AG04450 (cell line): ENCODE measurements at regions of chr2 and their contacts with region 1.

Region 1: DNA sequence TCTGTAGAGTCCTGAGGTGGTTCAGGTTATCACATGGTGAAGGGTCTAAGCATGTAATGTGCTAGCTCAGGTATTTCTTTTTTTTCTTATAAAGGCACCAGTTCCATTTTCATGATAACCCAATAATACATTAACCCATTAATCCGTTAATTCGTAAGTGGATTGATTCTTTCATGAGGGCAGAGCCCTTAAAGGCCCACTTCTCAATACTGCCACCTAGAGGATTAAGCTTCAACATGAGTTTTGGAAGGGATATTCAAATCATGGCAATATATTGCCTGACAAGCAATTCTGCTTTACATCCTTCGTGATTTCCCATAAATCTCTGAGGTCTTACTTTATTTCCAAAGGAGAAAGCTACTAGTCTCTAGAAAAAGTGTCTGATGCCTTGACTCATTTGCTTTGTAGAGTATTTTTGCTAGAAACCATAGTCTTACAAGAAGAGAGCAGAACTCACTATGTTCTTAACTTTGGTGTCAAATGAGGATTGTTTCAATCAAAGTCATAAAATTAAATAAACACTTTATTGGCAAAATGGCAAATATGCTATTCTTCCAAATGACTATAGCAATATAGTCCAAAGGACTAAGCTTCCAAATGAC is 271.3 kb downstream of the KCNS3 start:
- DNase-seq: peak; percentile 30
- H3K4me3 ChIP-seq: no peak overlapping the region
- H3K27ac ChIP-seq: no peak overlapping the region
- H3K27me3 ChIP-seq: peaks cover 7% of the 10 kb centered on the region
- CTCF ChIP-seq: peak; percentile 90

Region 2: GRCh38 chr2:17851731-17852585 is 297.8 kb before region 1 on chr2:
- CTCF ChIA-PET with region 1: interaction called, 94 read pairs
- POLR2A ChIA-PET with region 1: no interaction called
- DNase-seq: peak; percentile 34
- H3K4me3 ChIP-seq: no peak overlapping the region
- H3K27ac ChIP-seq: no peak overlapping the region
- H3K27me3 ChIP-seq: no peaks in the 10 kb centered on the region
- CTCF ChIP-seq: peak; percentile 95

Region 3: DNA sequence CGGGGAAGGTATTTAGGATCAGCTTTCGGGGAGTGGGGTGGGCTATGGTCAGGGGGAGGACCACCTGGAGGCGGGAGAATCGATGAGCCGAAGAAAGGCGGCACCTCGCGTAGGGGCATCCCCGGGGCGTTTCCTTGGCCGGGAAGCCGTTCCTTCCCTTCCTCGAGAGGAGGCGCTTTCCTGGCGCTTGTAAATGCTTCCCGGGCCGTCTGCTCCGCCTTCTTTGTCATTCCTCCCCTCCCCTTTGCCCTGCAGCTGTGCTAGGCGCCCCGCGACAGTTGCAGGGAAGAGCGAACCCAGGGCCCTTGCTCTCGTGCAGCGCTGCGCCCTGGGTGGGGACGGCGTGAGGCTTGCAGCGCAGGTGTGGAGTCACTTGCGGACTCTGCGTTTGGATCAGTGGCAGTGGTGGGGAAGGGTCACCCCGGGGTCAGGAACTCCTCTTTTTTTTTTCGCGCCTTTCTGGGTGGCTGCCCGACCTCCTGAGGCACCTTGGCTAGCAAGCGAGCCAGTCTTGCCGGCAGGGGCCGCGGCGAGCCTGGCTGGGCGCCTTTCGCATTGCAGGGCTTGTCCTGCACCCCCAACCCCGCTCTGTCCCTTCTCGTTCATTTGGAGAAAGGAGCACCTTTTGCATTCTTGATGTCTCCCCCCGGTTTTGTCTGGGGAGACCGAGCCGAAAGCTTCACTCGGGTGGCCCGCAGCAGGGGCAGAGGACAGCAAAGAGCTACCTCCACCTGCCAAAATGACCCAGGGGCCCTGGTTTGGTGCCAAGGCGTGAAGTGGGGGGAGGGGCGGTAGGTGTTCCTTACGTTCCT is 270.4 kb before region 1 on chr2:
- CTCF ChIA-PET with region 1: interaction called, 10 read pairs
- POLR2A ChIA-PET with region 1: no interaction called
- DNase-seq: no peak
- H3K4me3 ChIP-seq: peak overlapping the region; percentile 60
- H3K27ac ChIP-seq: no peak overlapping the region
- H3K27me3 ChIP-seq: peaks cover 48% of the 10 kb centered on the region
- CTCF ChIP-seq: peak; percentile 23; the same call in 1 of the 2 replicates

Region 4: GRCh38 chr2:18159896-18160295 is 10.2 kb after region 1 on chr2:
- CTCF ChIA-PET with region 1: interaction called, 32 read pairs
- POLR2A ChIA-PET with region 1: no interaction called
- DNase-seq: no peak
- H3K4me3 ChIP-seq: no peak overlapping the region
- H3K27ac ChIP-seq: no peak overlapping the region
- H3K27me3 ChIP-seq: peaks cover 2% of the 10 kb centered on the region
- CTCF ChIP-seq: no peak

Region 5: DNA sequence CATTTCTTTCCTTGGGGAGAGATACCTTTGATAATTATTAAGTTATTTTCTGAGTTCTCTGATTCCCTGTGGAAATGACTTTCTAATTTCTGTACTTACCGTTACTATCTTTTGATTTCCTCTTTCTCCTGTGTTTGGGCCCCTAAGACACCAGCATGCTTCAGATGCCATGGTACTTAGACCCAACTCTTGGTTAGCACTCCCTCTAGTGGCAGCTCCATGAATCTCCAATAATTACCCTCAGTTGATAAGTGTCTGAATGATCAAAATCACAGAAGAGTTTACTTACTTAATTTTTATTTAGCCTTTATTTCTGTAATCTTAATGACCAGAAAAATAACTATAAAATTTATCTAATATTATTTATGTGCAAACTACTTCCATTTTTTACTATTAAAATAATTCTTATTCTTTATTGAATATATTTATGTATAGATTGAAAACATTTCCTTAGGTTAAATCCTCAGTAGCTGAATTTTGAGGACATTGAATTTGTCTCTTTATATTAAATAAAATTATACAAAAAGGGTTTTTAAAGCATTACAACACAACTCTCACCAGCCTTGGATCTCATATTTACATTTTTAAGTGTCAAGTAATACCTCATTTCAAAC is 29.1 kb after region 1 on chr2:
- CTCF ChIA-PET with region 1: interaction called, 23 read pairs
- POLR2A ChIA-PET with region 1: no interaction called
- DNase-seq: peak; percentile 15
- H3K4me3 ChIP-seq: no peak overlapping the region
- H3K27ac ChIP-seq: no peak overlapping the region
- H3K27me3 ChIP-seq: no peaks in the 10 kb centered on the region
- CTCF ChIP-seq: peak; percentile 88

Region 6: GRCh38 chr2:18378020-18378653 is 228.4 kb after region 1 on chr2:
- CTCF ChIA-PET with region 1: interaction called, 32 read pairs
- POLR2A ChIA-PET with region 1: no interaction called
- DNase-seq: no peak
- H3K4me3 ChIP-seq: no peak overlapping the region
- H3K27ac ChIP-seq: no peak overlapping the region
- H3K27me3 ChIP-seq: no peaks in the 10 kb centered on the region
- CTCF ChIP-seq: peak; percentile 87